Posterior vena cava (tissue), 2 donors: ENCODE measurements at regions of chr10 and their contacts with region 1.

Region 1: GRCh38 chr10:2641028-2641427 is 426.3 kb upstream of the PFKP start:
- DNase-seq: no peak

Region 2: DNA sequence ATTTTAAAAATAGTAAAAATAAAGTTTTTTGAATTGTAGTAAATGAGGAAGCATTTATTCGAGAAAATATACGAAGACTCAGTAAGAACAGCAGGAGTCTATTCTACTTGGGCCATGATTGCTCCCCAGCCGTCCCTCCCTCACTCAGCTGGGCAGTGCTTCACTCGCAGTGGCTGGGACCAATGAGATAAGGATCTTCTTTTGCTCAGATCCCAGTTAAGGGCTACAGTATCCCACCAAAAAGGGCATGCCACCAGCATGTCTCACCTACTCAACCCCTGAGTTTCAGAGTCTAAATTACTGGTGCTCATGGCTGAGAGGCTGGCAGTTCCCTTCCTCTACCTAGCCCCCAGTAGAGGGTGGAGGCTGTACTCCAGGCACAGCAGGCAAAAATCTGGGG is 29.4 kb before region 1 on chr10:
- intact Hi-C with region 1: loop called in 1 of 2 experiments (anchors 2 kb)
- DNase-seq: no peak

Region 3: DNA sequence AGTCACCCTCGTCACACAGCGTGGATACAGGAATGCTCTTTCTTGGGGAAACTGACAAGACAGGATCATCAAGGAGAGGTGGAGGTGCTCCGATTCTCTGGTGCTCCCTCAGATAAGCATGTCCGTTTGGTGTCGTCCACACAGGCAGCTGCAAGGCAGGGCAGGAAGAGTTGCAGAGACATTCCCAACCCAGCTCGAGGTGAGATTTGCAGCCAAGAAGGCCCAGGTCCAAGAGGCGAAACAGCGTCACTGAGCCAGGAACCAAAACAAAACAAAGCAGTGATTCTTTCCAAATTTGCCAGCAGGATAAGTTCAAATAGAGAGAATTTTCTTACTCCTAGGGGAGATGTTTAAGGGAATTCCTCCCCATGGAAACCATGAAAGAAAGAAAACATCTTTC is 39.8 kb after region 1 on chr10:
- intact Hi-C with region 1: no loop called
- DNase-seq: no peak